Activated naive CD4-positive, alpha-beta T cell treated with anti-CD3 and anti-CD28 coated beads for 36 hours (primary cell): ENCODE measurements at regions of chr12 and their contacts with region 1.

Region 1: GRCh38 chr12:7108796-7109571 is at the start of gene C1RL:
- DNase-seq: peak; percentile 91
- H3K4me3 Mint-ChIP-seq: peak within 1 kb of the TSS; percentile 95
- H3K27ac Mint-ChIP-seq: peak within 1 kb of the TSS; percentile 97
- H3K4me1 Mint-ChIP-seq: peaks cover 29% of the 10 kb centered on the region
- H3K27me3 Mint-ChIP-seq: no peaks in the 10 kb centered on the region
- total RNA-seq, gene C1RL: 10.3 to 11.5 TPM

Region 2: DNA sequence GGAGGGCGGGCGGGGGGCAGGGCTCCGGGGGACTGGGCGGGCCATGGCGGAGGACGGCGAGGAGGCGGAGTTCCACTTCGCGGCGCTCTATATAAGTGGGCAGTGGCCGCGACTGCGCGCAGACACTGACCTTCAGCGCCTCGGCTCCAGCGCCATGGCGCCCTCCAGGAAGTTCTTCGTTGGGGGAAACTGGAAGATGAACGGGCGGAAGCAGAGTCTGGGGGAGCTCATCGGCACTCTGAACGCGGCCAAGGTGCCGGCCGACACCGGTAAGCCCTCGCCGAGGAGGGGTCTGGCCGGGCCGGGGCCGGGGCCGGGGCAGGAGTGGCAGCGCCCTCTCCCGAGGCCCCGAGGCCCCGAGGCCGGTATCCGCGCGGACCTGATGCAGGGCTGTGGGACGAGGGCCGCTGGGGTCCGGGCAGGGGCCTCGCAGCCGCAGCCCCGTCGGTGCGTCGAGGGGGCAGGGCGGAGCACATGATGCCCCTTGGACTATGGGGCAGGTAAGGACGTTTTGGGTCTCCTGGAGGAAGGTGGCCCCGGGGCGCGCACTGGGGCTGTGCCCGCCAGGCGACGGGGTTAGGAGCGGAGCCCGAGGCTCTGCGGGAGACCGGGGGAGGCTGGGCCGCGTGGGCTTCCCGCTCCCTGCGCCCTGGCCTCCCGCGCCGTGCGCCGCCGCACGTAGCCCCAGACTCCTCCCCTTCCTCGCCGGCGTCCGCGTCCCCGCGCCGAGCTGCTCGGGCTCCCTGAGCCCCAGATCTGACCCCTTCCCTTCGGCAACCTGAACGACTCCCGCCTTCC is 241.4 kb before region 1 on chr12 and contains the start of gene TPI1:
- CTCF ChIA-PET with region 1: no interaction called
- intact Hi-C with region 1: loop called (anchors 1 kb)
- DNase-seq: peak; percentile 79
- H3K4me3 Mint-ChIP-seq: peak within 1 kb of the TSS; percentile 98
- H3K27ac Mint-ChIP-seq: peak within 1 kb of the TSS; percentile 94
- H3K4me1 Mint-ChIP-seq: peaks cover 52% of the 10 kb centered on the region
- H3K27me3 Mint-ChIP-seq: no peaks in the 10 kb centered on the region
- total RNA-seq, gene TPI1: 1,222 to 1,282 TPM

Region 3: DNA sequence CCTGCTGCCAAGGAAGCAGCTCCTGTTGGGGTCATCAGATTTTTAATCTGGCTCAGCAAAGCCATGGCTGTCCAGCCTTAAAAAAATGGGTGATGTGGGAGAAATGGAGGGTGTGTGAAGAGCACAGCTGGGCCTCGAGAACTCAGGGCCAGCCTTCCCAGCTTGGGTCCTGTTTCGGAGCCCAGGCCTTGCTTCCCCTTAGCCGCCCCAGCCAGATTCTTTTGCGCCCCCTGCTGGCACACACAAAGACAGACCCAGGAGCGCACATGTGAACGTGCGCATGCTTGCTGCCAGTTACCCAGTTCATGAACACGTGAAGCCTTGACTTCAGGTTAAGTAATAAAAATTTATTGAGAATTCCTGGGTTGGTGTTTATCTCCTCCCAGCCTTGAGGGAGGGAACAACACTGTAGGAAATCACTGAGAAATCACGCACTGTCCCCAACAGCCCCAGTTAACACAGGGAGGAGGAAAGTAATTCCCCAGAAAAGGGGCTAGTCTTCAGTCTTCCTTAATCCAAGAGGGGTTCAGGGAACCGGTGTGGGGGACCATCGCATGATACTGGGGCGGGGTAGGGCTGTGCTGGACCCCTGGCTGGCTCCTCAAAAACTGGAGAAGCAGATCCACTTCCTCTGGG is 143.8 kb before region 1 on chr12:
- CTCF ChIA-PET with region 1: interaction called, 6 read pairs
- intact Hi-C with region 1: loop called (anchors 1 kb)
- DNase-seq: peak; percentile 95
- H3K4me3 Mint-ChIP-seq: no peak overlapping the region
- H3K27ac Mint-ChIP-seq: peak overlapping the region; percentile 93
- H3K4me1 Mint-ChIP-seq: peaks cover 81% of the 10 kb centered on the region
- H3K27me3 Mint-ChIP-seq: no peaks in the 10 kb centered on the region

Region 4: GRCh38 chr12:7092229-7092985 is 16.6 kb before region 1 on chr12 and contains the start of gene C1R:
- CTCF ChIA-PET with region 1: interaction called, 30 read pairs
- intact Hi-C with region 1: loop called (anchors 2 kb)
- DNase-seq: peak; percentile 83
- H3K4me3 Mint-ChIP-seq: peak within 1 kb of the TSS; percentile 73
- H3K27ac Mint-ChIP-seq: peak within 1 kb of the TSS; percentile 22
- H3K4me1 Mint-ChIP-seq: peaks cover 7% of the 10 kb centered on the region
- H3K27me3 Mint-ChIP-seq: no peaks in the 10 kb centered on the region
- total RNA-seq, gene C1R: 1.4 to 1.5 TPM

Region 5: DNA sequence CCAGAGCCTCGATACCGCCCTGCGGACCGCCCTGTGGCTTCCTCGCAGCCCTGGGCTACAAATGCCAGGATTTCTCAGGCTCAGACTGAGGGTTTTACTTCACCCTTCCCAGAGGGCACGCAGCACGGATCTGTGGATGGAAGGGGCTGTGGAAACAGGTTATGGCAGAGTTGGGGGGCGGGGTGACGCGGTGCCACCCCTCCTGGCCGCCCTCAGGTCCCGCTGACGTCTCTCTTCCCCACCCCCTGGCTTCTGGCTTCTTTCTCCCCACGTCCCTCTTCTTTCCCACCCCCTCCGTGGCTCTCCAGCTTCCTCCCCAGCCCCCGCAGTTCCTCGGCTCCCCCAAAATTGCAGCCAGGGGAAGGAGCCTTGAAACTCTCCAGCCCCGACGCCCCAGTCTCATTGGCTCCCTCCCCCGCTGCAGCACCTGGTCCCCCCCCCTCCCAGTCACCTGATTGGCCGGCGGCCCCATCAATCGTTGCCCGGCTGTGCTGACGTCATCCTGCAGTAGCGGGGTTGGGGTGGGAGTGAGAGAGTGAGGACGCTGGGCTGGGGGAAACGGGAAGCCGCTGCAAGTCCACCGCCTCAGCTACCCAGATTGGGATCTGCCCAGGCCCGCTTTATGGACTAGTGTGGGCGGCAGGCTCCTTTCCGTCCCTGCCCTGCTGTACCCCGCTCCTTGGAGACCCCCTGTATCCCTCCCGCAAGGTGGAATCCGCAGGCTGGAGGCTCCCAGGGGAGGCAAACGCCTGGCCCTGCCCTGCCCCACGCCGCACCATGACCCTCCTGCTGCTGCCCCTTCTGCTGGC is 21.1 kb after region 1 on chr12 and contains the start of gene CLSTN3:
- CTCF ChIA-PET with region 1: interaction called, 7 read pairs
- intact Hi-C with region 1: loop called (anchors 1 kb)
- DNase-seq: peak; percentile 87
- H3K4me3 Mint-ChIP-seq: peak within 1 kb of the TSS; percentile 82
- H3K27ac Mint-ChIP-seq: peak within 1 kb of the TSS; percentile 55
- H3K4me1 Mint-ChIP-seq: peaks cover 27% of the 10 kb centered on the region
- H3K27me3 Mint-ChIP-seq: no peaks in the 10 kb centered on the region
- total RNA-seq, gene CLSTN3: 18.3 to 21.8 TPM

Region 6: GRCh38 chr12:7180685-7181084 is 71.7 kb after region 1 on chr12:
- CTCF ChIA-PET with region 1: no interaction called
- intact Hi-C with region 1: no loop called
- DNase-seq: no peak
- H3K4me3 Mint-ChIP-seq: no peak overlapping the region
- H3K27ac Mint-ChIP-seq: no peak overlapping the region
- H3K4me1 Mint-ChIP-seq: no peaks in the 10 kb centered on the region
- H3K27me3 Mint-ChIP-seq: peaks cover 16% of the 10 kb centered on the region